GM10248 (cell line): ENCODE measurements at regions of chr1 and their contacts with region 1.

Region 1: GRCh38 chr1:28602536-28603439 is 10.7 kb downstream of the RAB42 start:
- DNase-seq: peak; percentile 56
- CTCF ChIP-seq: peak; percentile 75

Region 2: GRCh38 chr1:28359592-28360239 is 243.1 kb before region 1 on chr1:
- CTCF ChIA-PET with region 1: interaction called, 44 read pairs
- POLR2A ChIA-PET with region 1: no interaction called
- DNase-seq: peak; percentile 69
- CTCF ChIP-seq: peak; percentile 57

Region 3: DNA sequence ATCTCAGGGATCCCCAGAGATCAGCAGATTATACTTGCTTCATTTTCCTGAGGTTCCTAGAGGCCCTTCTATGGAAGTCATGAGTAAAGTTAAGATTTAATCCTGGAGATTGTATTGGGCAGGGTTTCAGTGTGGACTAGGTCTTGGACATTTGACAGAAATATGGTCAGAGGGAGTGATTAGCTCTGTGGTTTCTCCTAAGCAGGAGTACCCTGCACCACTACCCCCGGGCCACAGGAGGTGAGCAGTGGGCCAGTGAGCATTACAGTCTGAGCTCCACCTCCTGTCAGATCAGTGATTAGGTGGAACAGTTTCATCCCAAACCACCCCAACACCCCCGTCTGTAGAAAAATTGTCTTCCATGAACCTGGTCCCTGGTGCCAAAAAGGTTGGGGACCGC is 190.1 kb before region 1 on chr1:
- CTCF ChIA-PET with region 1: interaction called, 31 read pairs
- POLR2A ChIA-PET with region 1: no interaction called
- DNase-seq: no peak
- CTCF ChIP-seq: no peak

Region 4: DNA sequence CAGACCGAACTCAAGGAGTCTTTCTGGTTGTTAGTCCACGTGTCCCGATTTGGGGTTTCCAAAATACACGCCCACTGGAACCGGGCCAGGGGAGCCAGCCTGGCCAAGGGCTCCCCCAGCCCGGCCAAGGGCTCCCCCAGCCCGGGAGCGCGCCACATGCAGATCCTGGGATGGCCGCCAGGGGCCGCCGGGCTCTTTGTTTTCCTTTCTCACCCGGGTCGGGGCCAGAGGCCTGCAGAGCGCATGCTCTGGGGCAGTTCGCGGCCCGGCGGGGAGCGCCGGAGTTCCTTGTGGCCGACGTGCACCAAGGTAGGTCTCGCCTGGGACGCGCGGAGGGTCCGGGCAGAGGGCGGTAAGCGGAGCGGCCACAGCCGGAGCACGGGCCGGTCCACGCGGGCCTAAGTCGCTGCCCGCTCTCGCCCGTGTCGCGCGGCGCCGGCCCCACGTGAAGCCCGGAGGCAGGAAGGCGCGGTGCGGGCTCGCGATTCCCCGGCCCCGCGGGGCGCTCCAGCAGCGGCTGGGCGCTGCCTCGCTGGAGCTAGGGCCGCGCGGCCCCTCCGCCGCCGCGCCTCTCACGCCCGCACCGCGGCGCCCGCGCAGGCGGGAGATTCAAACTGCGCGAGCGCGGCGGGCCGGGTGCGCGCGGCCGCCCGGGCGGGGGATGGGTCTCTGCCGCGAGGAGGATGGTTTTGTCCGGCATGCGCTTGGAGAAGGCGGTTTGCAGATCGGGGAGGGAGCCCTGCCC is 84.6 kb before region 1 on chr1:
- CTCF ChIA-PET with region 1: interaction called, 24 read pairs
- POLR2A ChIA-PET with region 1: no interaction called
- DNase-seq: peak; percentile 91
- CTCF ChIP-seq: peak; percentile 91

Region 5: DNA sequence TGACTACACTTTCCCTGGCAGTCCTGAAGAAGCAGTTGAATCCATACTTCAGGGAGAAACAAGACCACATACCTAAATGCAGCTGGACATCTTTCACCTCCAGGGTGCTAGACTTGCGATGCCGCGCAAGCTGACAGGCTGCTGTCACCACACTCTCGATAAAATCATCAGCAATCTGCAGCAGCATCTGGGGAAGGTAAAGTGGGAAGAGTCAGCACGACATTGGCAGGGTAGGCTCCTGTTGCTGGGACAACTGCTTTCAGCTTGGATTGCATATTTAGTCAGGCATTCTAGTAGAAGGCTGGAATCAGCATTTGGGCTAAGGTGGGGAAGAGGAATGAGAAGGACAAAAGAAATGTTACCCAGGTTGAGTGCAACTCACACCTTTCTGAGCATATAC is 10.4 kb after region 1 on chr1:
- CTCF ChIA-PET with region 1: interaction called, 31 read pairs
- POLR2A ChIA-PET with region 1: no interaction called
- DNase-seq: no peak
- CTCF ChIP-seq: no peak